PC-9 (cell line): ENCODE measurements at regions of chr9 and their contacts with region 1.

Region 1: DNA sequence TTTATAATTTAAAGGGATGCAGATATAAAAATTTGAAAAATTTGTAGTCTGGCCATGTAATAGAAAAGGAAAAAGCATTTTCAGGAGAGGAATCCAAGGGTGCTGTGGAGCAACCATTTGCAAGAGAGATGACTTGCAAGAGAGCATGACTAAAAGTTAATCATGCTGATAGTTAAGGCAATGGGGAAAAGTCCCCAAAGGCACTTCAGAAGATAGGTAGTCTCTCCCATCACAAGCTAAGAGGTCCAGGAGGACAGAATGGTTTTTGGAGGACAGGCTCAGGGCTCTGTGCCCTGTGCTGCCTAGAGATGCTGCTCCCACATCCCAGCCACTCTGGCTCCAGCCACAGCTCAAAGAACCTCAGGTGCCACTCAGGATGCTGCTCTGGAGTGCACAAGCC is 38.8 kb downstream of the DNAJB5 start:
- DNase-seq: no peak
- H3K4me3 ChIP-seq: no peak overlapping the region
- H3K27ac ChIP-seq: no peak overlapping the region
- H3K4me1 ChIP-seq: peaks cover 21% of the 10 kb centered on the region
- H3K27me3 ChIP-seq: no peaks in the 10 kb centered on the region
- CTCF ChIP-seq: no peak

Region 2: DNA sequence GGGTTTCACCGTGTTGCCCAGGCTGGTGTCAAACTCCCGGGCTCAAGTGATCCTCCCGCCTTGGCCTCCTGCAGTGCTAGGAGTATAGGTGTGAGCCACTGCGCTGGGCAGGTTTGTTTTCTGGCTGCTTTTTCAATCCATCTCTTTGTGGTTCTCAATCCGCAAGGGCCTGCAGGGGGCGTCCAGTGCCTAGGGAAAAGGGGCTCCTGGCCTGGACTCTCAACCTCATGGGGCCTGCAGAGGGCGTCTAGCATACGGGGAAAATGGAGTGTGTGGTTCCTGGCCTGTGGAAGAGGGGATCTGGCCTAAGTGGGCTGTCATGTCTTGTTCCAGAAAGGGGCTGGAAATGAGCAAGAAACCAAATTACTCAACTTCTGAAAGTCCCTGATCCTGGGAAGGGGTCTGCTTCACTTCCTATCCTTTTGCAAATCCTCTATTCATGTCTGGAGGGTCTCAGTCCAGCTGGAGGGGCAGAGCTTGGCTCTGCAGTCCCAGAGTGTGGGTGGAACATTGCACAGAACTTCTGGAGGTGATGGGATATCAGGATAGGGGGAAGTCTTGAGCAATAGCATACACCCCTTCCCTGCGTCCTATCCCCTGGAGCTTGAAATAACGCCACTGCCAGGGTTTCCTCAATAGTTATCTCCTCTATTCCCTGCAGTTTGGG is 353.2 kb before region 1 on chr9:
- CTCF ChIA-PET with region 1: no interaction called
- POLR2A ChIA-PET with region 1: no interaction called
- intact Hi-C with region 1: no loop called
- DNase-seq: peak in 1 of 2 experiments; percentile 16
- H3K4me3 ChIP-seq: no peak overlapping the region
- H3K27ac ChIP-seq: no peak overlapping the region
- H3K4me1 ChIP-seq: no peaks in the 10 kb centered on the region
- H3K27me3 ChIP-seq: no peaks in the 10 kb centered on the region
- CTCF ChIP-seq: peak; percentile 64

Region 3: DNA sequence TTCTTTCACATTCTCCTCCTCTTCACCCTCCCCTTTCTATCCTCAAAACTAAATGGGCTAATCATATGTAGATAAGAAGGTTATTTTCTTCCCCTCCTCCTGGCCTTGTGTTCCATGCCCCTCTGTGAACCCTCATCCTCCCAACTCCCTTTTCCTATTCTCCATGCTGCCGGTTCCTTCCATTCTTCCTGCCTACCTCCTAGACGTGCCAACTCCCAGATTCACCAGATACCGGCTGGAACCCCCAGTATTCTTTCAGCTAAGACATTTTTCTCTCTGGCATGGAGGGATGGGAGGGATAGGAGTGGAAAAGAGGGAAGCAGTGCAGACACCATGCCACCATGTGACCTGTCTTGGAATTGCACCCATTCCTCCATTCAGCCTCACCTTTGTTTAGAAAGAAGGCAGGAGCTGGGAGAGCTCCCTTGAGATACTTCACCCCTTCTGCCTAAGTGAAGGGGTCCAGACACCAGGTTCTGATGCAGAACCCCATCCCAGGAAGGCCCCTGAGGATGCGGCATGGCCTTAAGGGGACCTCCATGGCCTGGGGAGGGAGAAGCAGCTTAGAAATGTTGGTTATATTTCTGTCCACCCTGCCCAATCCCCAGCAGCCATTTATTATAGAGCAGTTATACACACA is 34.0 kb before region 1 on chr9:
- CTCF ChIA-PET with region 1: no interaction called
- POLR2A ChIA-PET with region 1: interaction called, 14 read pairs
- intact Hi-C with region 1: no loop called
- DNase-seq: peak in 1 of 2 experiments; percentile 22
- H3K4me3 ChIP-seq: no peak overlapping the region
- H3K27ac ChIP-seq: no peak overlapping the region
- H3K4me1 ChIP-seq: peaks cover 17% of the 10 kb centered on the region; the same call in 1 of the 2 replicates
- H3K27me3 ChIP-seq: no peaks in the 10 kb centered on the region
- CTCF ChIP-seq: peak; percentile 67

Region 4: GRCh38 chr9:35071814-35072460 is 43.6 kb after region 1 on chr9:
- CTCF ChIA-PET with region 1: no interaction called
- POLR2A ChIA-PET with region 1: interaction called, 18 read pairs
- intact Hi-C with region 1: no loop called
- DNase-seq: peak; percentile 48 to 65
- H3K4me3 ChIP-seq: peak overlapping the region; percentile 91
- H3K27ac ChIP-seq: peak overlapping the region; percentile 97
- H3K4me1 ChIP-seq: peaks cover 17% of the 10 kb centered on the region
- H3K27me3 ChIP-seq: no peaks in the 10 kb centered on the region
- CTCF ChIP-seq: peak; percentile 29; the same call in 1 of the 2 replicates